B cell (primary cell): ENCODE measurements at regions of chr12 and their contacts with region 1.

Region 1: GRCh38 chr12:17778242-17778641 is 311.8 kb downstream of the RERGL start:
- DNase-seq: no peak
- ATAC-seq: no peak
- H3K4me3 ChIP-seq: no peak overlapping the region
- H3K4me3 Mint-ChIP-seq: no peak overlapping the region
- H3K27ac ChIP-seq: no peak overlapping the region
- H3K27ac Mint-ChIP-seq: no peak overlapping the region
- H3K4me1 ChIP-seq: no peaks in the 10 kb centered on the region
- H3K4me1 Mint-ChIP-seq: no peaks in the 10 kb centered on the region
- H3K27me3 ChIP-seq: no peaks in the 10 kb centered on the region
- H3K27me3 Mint-ChIP-seq: no peaks in the 10 kb centered on the region
- CTCF ChIP-seq: no peak

Region 2: GRCh38 chr12:17239870-17240269 is 538.4 kb before region 1 on chr12:
- CTCF ChIA-PET with region 1: no interaction called
- POLR2A ChIA-PET with region 1: no interaction called
- intact Hi-C with region 1: no loop called
- DNase-seq: no peak
- ATAC-seq: no peak
- H3K4me3 ChIP-seq: no peak overlapping the region
- H3K4me3 Mint-ChIP-seq: no peak overlapping the region
- H3K27ac ChIP-seq: no peak overlapping the region
- H3K27ac Mint-ChIP-seq: no peak overlapping the region
- H3K4me1 ChIP-seq: no peaks in the 10 kb centered on the region
- H3K4me1 Mint-ChIP-seq: no peaks in the 10 kb centered on the region
- H3K27me3 ChIP-seq: no peaks in the 10 kb centered on the region
- H3K27me3 Mint-ChIP-seq: no peaks in the 10 kb centered on the region
- CTCF ChIP-seq: no peak

Region 3: GRCh38 chr12:17866802-17867201 is 88.6 kb after region 1 on chr12:
- CTCF ChIA-PET with region 1: no interaction called
- POLR2A ChIA-PET with region 1: no interaction called
- intact Hi-C with region 1: loop called (anchors 2 kb)
- DNase-seq: no peak
- ATAC-seq: no peak
- H3K4me3 ChIP-seq: no peak overlapping the region
- H3K4me3 Mint-ChIP-seq: no peak overlapping the region
- H3K27ac ChIP-seq: no peak overlapping the region
- H3K27ac Mint-ChIP-seq: no peak overlapping the region
- H3K4me1 ChIP-seq: no peaks in the 10 kb centered on the region
- H3K4me1 Mint-ChIP-seq: no peaks in the 10 kb centered on the region
- H3K27me3 ChIP-seq: no peaks in the 10 kb centered on the region
- H3K27me3 Mint-ChIP-seq: no peaks in the 10 kb centered on the region
- CTCF ChIP-seq: no peak

Region 4: GRCh38 chr12:17875230-17875629 is 97.0 kb after region 1 on chr12:
- CTCF ChIA-PET with region 1: no interaction called
- POLR2A ChIA-PET with region 1: no interaction called
- intact Hi-C with region 1: loop called (anchors 5 kb)
- DNase-seq: no peak
- ATAC-seq: no peak
- H3K4me3 ChIP-seq: no peak overlapping the region
- H3K4me3 Mint-ChIP-seq: no peak overlapping the region
- H3K27ac ChIP-seq: no peak overlapping the region
- H3K27ac Mint-ChIP-seq: no peak overlapping the region
- H3K4me1 ChIP-seq: no peaks in the 10 kb centered on the region
- H3K4me1 Mint-ChIP-seq: no peaks in the 10 kb centered on the region
- H3K27me3 ChIP-seq: no peaks in the 10 kb centered on the region
- H3K27me3 Mint-ChIP-seq: no peaks in the 10 kb centered on the region
- CTCF ChIP-seq: no peak